Activated T-helper 2 cell treated with anti-CD3 and anti-CD28 coated beads, Interferon-gamma antibody, Interleukin-2, Interleukin-4, amounts not matched to agents 10 μg/mL and 5 μg/mL and 100 μg/mL, durations not matched to agents 14 hours and 24 hours and 36 hours (primary cell): ENCODE measurements at regions of chr13 and their contacts with region 1.

Region 1: DNA sequence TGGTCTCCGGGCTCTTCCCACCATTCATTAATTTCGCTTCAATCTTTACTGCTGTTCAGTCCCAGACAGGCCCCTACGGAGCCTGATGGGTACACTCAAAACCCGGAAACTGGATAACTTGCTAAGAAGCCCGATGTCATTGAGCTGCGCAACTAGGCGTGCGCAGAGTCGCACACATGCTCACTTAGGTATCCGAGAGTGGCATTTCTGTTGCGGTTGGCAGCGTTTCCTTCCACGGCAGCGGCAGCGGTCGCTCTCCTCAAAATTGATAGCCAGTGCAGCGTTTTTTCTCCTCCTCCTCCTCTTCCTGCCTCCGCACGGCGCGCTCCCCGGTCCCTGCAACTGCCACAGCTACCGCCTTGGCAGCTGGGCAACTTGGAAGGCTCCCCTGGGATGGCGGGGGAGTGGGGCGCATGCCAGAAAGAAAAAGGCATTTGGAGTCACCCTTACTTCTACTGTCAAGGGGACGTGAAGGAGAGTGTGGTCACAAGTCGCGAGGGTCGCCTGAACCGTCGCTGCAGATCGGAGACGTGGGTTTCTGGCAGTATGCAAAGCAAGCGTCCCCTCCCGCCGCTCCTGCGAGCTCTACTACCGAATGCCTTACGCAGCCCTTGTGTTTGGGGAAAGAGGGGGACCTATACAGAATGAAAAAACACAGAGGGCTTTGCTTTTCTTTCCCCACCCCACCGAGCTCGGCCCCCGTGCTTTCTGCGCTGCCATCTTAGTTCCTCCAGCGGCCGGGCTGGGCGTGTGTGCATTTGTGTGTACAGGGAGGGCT is 2.4 kb upstream of the MYCBP2 start:
- DNase-seq: peak; percentile 93
- H3K4me3 Mint-ChIP-seq: peak overlapping the region; percentile 99
- H3K27ac Mint-ChIP-seq: peak overlapping the region; percentile 99
- H3K4me1 Mint-ChIP-seq: peaks cover 36% of the 10 kb centered on the region
- H3K27me3 Mint-ChIP-seq: peaks cover 3% of the 10 kb centered on the region

Region 2: DNA sequence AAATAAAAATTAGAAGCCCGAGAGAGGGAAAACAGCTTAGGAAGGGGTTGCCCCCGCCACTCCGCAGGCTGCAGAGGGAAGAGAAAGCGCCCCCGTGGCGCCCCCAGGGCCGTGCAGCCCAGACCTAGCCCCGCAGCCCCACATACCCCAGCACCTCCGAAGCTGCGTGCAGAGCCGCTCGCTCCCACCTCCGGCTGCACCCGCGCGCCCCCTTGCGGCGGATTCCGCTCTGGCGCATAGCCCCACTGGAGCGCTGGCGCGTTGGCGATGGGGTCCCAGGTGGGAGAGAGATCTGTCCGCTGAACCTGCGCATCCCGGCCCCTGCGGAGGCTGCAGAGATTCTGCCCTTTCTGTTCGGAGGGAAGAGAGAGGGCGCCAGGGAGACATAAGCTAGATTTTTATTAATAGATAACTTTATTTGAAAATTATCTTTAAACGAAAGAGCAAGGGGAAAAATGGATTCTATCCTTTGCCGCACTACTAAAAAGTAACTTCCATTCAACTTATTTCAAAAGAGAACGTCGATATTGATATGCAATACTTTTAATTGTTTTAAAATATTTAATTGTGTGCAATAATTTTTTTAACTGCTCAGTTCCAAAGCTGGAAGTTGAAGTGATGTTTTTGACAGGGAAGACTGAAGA is 349.1 kb before region 1 on chr13:
- intact Hi-C with region 1: no loop called
- DNase-seq: peak; percentile 68
- H3K4me3 Mint-ChIP-seq: peak overlapping the region; percentile 71
- H3K27ac Mint-ChIP-seq: no peak overlapping the region
- H3K4me1 Mint-ChIP-seq: peaks cover 12% of the 10 kb centered on the region
- H3K27me3 Mint-ChIP-seq: peaks cover 34% of the 10 kb centered on the region

Region 3: GRCh38 chr13:77009011-77009410 is 320.3 kb before region 1 on chr13:
- intact Hi-C with region 1: loop called (anchors 5 kb)
- DNase-seq: no peak
- H3K4me3 Mint-ChIP-seq: no peak overlapping the region
- H3K27ac Mint-ChIP-seq: peak overlapping the region; percentile 62
- H3K4me1 Mint-ChIP-seq: peaks cover 22% of the 10 kb centered on the region
- H3K27me3 Mint-ChIP-seq: no peaks in the 10 kb centered on the region

Region 4: DNA sequence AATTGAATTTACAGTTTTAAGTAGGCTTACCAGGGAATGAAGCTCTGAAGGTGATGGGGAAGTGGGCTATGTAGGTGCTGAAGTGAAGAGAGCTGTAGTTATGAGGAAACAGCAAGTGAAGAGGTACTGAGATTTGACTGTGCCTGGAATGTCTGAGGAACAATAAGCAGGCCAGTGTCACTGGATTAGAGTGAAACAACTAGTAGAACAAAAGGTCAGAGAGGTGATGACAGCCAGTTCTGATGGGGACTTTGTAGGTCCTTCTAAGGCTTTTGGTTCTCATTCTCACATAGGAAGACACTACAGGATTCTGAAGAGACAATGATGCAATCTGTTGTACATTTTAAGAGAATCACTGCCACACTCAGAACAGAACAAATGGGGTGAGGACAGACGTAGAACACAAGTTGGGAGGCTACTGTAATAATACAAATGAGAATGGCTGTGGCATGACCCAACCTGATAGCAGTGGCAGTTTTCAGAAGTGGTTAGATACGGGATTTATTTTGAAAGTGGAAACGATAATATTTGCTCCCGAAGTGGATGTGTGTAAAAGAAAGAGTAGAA is 133.2 kb before region 1 on chr13:
- intact Hi-C with region 1: no loop called
- DNase-seq: no peak
- H3K4me3 Mint-ChIP-seq: no peak overlapping the region
- H3K27ac Mint-ChIP-seq: no peak overlapping the region
- H3K4me1 Mint-ChIP-seq: peaks cover 2% of the 10 kb centered on the region
- H3K27me3 Mint-ChIP-seq: no peaks in the 10 kb centered on the region

Region 5: DNA sequence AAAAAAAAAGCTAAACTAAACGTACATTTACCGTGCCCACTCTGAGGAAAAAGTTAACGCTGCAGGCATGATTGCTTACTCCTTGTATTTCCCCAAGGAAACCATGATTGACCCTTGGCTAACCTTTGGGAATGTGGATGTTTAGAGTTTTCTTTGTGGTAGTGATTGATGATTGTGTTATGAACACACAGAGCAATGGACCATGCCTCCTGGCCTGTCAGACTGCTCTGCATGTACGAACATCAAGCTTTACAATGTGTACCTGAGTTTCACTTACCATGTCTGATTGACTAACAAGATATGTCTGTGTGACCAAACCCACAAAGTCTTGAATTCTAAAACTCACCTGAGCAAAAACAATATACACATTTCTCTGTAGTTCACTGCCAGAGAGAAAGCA is 37.5 kb before region 1 on chr13:
- intact Hi-C with region 1: loop called (anchors 1 kb)
- DNase-seq: no peak
- H3K4me3 Mint-ChIP-seq: no peak overlapping the region
- H3K27ac Mint-ChIP-seq: no peak overlapping the region
- H3K4me1 Mint-ChIP-seq: peaks cover 21% of the 10 kb centered on the region
- H3K27me3 Mint-ChIP-seq: no peaks in the 10 kb centered on the region

Region 6: GRCh38 chr13:77389625-77390000 is 60.3 kb after region 1 on chr13:
- intact Hi-C with region 1: loop called (anchors 1 kb)
- DNase-seq: no peak
- H3K4me3 Mint-ChIP-seq: no peak overlapping the region
- H3K27ac Mint-ChIP-seq: peak overlapping the region; percentile 34
- H3K4me1 Mint-ChIP-seq: peaks cover 41% of the 10 kb centered on the region
- H3K27me3 Mint-ChIP-seq: peaks cover 29% of the 10 kb centered on the region

Region 7: GRCh38 chr13:77460195-77460594 is 130.9 kb after region 1 on chr13:
- intact Hi-C with region 1: no loop called
- DNase-seq: no peak
- H3K4me3 Mint-ChIP-seq: no peak overlapping the region
- H3K27ac Mint-ChIP-seq: no peak overlapping the region
- H3K4me1 Mint-ChIP-seq: no peaks in the 10 kb centered on the region
- H3K27me3 Mint-ChIP-seq: peaks cover 35% of the 10 kb centered on the region

Region 8: DNA sequence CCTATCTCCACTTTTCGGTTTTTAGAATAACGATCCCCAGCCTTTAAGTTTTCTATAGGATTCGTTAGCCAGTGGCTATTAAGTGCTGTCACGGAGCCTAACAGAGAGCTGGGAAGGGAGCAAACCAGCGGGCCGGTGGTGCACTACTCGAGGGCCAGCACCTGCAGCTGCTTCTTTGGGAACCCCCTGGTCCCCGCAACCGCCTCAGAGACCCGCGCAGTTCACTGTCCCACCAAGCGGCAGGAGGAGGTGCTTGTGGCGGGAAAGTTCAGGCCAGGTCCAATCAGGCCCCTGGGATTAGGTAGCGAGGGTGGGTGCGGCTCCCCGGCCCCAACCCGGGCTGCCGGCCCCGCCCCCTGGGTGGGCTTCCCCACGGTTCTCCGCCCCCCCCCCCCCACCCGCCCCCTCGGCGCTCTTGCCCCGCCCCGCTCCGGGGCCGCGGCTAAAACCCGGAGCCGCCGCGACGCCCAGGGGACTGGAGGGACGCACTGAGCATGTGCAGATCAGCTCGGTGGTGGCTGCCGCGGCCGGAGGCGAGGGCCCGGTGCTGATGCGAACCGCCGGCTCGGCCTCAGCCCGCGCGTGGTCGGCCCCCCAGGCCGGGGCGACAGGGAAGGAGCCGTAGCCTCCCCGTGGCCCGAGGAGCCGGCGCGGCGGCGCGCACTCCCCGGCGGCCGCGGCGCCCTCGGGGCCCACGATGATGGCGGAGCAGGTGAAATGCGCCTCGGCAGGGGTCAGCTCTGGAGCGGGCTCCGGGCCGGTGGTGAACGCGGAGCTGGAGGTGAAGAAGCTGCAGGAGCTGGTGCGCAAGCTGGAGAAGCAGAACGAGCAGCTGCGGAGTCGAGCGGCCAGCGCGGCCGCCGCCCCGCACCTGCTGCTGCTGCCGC is 368.1 kb after region 1 on chr13 and contains the start of gene SLAIN1:
- intact Hi-C with region 1: loop called (anchors 2 kb)
- DNase-seq: peak; percentile 75
- H3K4me3 Mint-ChIP-seq: peak within 1 kb of the TSS; percentile 98
- H3K27ac Mint-ChIP-seq: peak within 1 kb of the TSS; percentile 54
- H3K4me1 Mint-ChIP-seq: peaks cover 34% of the 10 kb centered on the region
- H3K27me3 Mint-ChIP-seq: peaks cover 26% of the 10 kb centered on the region
- total RNA-seq, gene SLAIN1: 33.3 and 35.9 TPM in 2 replicates